Left colon (tissue), 2 donors: ENCODE measurements at regions of chr10 and their contacts with region 1.

Region 1: GRCh38 chr10:34815185-34816084 is at the start of gene PARD3:
- DNase-seq: peak; percentile 70 to 75
- ATAC-seq: peak; percentile 77
- total RNA-seq, gene PARD3: 45.5 to 52.9 TPM

Region 2: GRCh38 chr10:34626158-34626880 is 189.1 kb before region 1 on chr10:
- intact Hi-C with region 1: no loop called
- DNase-seq: no peak
- ATAC-seq: no peak

Region 3: DNA sequence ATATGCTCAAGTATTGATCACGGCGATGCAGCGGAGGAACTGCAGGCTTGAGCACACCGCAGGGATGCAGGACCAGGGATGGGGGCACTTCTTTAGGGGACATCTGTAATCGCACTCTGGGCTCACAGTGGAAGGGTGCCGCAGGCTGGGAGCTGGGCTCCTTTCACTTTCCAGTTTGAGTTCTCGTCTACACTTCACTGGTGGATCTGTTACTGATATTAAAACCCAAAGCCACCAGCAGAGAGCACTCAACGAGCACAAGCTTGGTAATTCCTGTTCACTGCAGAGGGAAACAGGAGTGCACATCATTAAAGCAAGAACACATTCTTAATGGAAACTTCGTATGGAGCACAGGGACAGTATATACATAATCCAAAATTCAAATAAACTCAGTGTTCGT is 91.7 kb before region 1 on chr10:
- intact Hi-C with region 1: loop called in 1 of 2 experiments (anchors 5 kb)
- DNase-seq: peak; percentile 36 to 56
- ATAC-seq: peak; percentile 95